Activated CD4-positive, alpha-beta T cell treated with anti-CD3 and anti-CD28 coated beads, Interleukin-2, amount 10 ng/mL, durations not matched to agents 24 days and 14 days (primary cell): ENCODE measurements at regions of chr9 and their contacts with region 1.

Region 1: GRCh38 chr9:112037281-112038016 is 137.6 kb downstream of the SUSD1 start:
- DNase-seq: peak; percentile 92
- H3K4me3 Mint-ChIP-seq: peak overlapping the region; percentile 52
- H3K27ac Mint-ChIP-seq: peak overlapping the region; percentile 88
- H3K4me1 Mint-ChIP-seq: peaks cover 45% of the 10 kb centered on the region
- H3K27me3 Mint-ChIP-seq: peaks cover 17% of the 10 kb centered on the region

Region 2: DNA sequence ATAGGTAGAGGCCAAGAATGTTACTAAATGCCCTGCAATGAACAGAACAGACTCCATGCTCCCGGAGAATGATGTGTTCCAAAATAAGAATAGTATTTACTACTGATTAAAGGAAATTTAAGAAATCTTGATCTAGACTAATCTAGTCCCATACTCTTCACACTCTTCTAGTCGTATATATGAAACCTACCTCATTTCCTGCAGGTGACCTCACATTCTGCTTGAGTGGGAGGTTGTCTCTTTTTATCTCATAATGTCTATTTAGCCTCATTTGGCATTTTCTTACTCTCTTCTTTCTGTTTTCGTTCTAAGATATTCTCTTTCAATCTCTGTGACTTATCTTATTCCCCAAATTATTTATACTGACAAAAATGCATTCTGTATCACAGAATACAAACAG is 233.5 kb before region 1 on chr9:
- intact Hi-C with region 1: loop called (anchors 1 kb)
- DNase-seq: no peak
- H3K4me3 Mint-ChIP-seq: peak overlapping the region; percentile 9
- H3K27ac Mint-ChIP-seq: peak overlapping the region; percentile 61
- H3K4me1 Mint-ChIP-seq: peaks cover 10% of the 10 kb centered on the region
- H3K27me3 Mint-ChIP-seq: no peaks in the 10 kb centered on the region

Region 3: DNA sequence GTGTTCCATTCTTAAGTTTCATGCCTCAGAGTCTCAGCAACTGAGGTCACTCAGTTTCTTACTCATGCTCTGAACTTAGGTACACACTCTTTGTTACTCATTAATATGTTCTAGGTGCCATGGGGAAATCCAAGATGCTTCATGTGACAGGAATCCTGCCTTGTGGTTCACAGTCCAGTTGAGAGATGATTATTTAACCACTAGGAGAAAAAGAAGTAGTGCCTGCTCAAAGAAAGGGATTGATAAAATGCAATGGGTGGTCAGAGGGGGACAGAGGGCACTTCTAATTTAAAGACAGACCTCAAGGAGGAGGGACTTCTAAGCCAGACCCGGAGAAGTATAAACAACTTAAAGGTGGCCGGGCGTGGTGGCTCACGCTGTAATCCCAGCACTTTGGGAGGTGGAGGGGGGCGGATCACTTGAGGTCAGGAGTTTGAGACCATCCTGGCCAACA is 71.9 kb before region 1 on chr9:
- intact Hi-C with region 1: loop called (anchors 1 kb)
- DNase-seq: no peak
- H3K4me3 Mint-ChIP-seq: no peak overlapping the region
- H3K27ac Mint-ChIP-seq: peak overlapping the region; percentile 8
- H3K4me1 Mint-ChIP-seq: peaks cover 7% of the 10 kb centered on the region
- H3K27me3 Mint-ChIP-seq: peaks cover 11% of the 10 kb centered on the region

Region 4: DNA sequence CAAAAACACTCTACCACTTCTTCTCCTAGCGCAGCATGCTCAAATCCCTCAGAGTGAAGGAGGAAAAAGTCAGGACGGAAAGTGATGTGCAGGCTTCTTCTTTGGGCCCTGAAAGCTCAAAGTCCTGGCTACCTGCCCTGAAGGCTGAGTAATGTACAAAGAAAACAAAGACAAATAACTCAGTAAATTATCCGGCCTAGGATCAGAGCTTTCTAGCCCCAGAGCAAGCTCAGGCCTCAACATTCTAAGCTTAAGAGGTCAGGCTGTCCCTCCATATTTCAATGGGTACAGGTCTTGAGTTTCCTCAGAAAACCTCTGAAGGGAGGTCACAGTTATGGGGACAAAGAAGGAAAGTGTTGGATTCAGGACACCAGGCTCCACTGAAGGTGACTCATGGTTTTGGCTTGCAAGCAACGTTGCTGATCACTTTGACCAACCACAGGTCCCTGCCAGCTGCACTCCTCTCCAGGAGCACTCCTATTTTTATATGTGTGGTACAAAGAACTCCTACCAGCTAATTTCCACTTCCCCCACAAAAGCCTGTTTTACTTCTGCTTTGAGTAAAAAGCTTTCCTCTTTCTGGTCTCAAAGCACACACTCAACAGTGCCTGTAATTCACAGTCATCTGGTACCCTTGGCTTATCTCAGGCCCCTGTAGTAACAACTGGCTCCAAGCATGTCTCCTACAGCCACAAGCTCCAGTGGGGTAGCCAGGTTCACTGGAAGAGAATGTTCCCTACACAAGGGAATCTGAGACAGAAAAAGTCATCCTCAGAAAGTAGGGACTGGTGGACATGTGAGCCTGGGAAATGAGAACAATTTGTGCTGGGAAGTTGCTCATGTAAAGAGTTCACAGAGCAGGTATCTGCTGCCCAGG is 25.2 kb before region 1 on chr9:
- intact Hi-C with region 1: loop called (anchors 1 kb)
- DNase-seq: no peak
- H3K4me3 Mint-ChIP-seq: peak overlapping the region; percentile 15
- H3K27ac Mint-ChIP-seq: peak overlapping the region; percentile 64
- H3K4me1 Mint-ChIP-seq: peaks cover 20% of the 10 kb centered on the region
- H3K27me3 Mint-ChIP-seq: peaks cover 36% of the 10 kb centered on the region

Region 5: GRCh38 chr9:112074250-112075008 is 37.0 kb after region 1 on chr9:
- intact Hi-C with region 1: loop called (anchors 1 kb)
- DNase-seq: peak; percentile 89
- H3K4me3 Mint-ChIP-seq: peak overlapping the region; percentile 7
- H3K27ac Mint-ChIP-seq: peak overlapping the region; percentile 5
- H3K4me1 Mint-ChIP-seq: peaks cover 24% of the 10 kb centered on the region
- H3K27me3 Mint-ChIP-seq: peaks cover 3% of the 10 kb centered on the region

Region 6: DNA sequence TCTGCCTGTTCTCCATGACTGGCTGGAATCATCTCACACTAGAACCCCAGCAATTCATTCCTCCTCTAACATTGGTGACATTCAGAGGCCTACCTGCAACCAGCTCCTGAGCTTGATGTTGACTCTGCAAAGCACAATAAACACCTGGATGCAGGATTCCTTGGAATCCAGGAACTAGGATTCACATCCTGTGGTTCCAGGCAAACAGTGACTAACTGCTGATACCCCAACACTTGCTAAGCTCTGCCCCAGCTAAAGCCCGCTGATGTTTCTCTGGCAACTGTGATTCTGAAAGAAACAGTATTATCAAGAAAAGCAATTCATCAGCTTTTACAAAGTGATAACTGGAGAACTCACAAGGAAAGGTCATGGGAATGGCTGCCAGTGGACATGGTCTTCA is 108.4 kb after region 1 on chr9:
- intact Hi-C with region 1: no loop called
- DNase-seq: no peak
- H3K4me3 Mint-ChIP-seq: no peak overlapping the region
- H3K27ac Mint-ChIP-seq: no peak overlapping the region
- H3K4me1 Mint-ChIP-seq: peaks cover 2% of the 10 kb centered on the region
- H3K27me3 Mint-ChIP-seq: no peaks in the 10 kb centered on the region